ENCODE measurements at regions of chr1 and their contacts with region 1.

Region 1: DNA sequence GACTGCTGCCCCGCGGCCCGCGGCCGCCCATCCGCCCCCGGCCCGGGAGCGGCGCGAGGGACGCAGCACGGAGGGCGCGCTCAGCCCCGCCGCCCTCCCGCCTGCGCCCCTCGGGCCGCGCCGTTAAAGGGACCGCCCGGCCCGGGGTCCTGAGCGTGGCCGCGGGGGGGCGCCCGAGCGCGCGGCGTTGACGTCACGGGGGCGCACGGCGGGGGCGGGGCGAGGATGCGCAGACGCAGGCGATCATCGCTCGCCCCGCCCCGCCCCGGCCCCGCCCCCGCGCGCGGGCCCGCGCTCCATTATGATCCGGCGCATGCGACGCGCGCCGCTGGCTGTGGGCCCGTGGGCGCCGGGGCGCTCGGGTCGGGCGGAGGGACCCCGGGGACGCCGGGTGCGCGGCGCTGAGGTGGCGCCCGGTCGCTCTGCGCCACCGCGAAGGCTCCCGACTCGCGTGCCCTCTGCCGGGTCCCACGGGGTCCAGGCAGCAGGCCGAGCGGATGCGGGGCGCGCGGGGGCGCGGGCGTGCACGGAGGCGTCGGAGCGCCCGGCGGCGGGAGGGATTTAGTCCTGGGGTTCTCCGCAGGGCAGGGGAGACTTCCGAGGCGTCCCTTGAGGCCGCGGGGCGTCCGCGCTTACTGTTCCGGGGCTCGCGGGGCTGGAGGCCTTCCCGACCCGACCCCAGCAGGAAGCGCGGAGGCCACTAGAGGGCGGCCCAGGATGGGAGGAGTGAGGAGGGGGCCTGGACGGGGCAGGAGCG is at the start of gene DVL1:
- DNase-seq: peak; percentile 74 to 86 (median 81)
- H3K4me3 ChIP-seq: peak within 1 kb of the TSS; percentile 60
- H3K27ac ChIP-seq: peak within 1 kb of the TSS; percentile 59 to 90
- H3K4me1 ChIP-seq: peaks cover 33% of the 10 kb centered on the region
- H3K27me3 ChIP-seq: no peaks in the 10 kb centered on the region
- CTCF ChIP-seq: peak in 2 of 3 donors; percentile 68 to 77
- EP300 ChIP-seq: no peak
- POLR2A ChIP-seq: peak; percentile 41
- total RNA-seq, gene DVL1: 38.0 to 85.2 (median 64.9) TPM

Region 2: DNA sequence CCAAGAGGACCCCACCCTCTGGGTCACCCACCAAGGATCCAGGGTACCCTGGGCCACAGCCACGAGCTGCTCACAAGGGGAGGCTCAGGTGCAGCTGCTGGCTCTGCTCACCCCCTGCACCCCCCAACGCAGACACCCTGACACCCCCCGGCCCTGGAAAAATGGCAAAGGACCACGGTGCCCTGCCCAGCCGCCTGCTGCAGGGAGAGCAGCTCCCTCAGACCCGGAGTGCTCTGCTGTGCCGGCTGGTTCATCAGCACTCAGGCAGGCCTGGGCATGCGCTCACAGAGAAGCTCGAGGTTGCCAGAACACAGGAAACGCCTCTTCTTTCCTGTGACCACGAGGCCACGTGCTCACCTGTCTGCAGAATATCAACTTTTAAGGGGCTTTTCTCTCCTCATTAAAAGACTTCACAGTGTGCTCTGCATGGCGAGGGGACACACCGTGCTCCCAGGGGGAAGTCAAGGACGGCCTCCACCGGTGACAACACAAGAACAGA is 98.6 kb before region 1 on chr1:
- intact Hi-C with region 1: no loop called
- DNase-seq: no peak
- H3K4me3 ChIP-seq: no peak overlapping the region
- H3K27ac ChIP-seq: no peak overlapping the region
- H3K4me1 ChIP-seq: no peaks in the 10 kb centered on the region
- H3K27me3 ChIP-seq: no peaks in the 10 kb centered on the region
- CTCF ChIP-seq: no peak
- EP300 ChIP-seq: no peak
- POLR2A ChIP-seq: no peak

Region 3: GRCh38 chr1:1273512-1274298 is 75.7 kb before region 1 on chr1 and contains the start of gene UBE2J2:
- intact Hi-C with region 1: loop called in 1 of 4 experiments (anchors 1 kb)
- DNase-seq: peak; percentile 93 to 95 (median 95)
- H3K4me3 ChIP-seq: peak within 1 kb of the TSS; percentile 82
- H3K27ac ChIP-seq: peak within 1 kb of the TSS; percentile 40 to 50
- H3K4me1 ChIP-seq: peaks cover 28% of the 10 kb centered on the region
- H3K27me3 ChIP-seq: no peaks in the 10 kb centered on the region
- CTCF ChIP-seq: no peak
- EP300 ChIP-seq: no peak
- POLR2A ChIP-seq: peak; percentile 69
- total RNA-seq, gene UBE2J2: 35.8 to 55.6 (median 49.3) TPM

Region 4: DNA sequence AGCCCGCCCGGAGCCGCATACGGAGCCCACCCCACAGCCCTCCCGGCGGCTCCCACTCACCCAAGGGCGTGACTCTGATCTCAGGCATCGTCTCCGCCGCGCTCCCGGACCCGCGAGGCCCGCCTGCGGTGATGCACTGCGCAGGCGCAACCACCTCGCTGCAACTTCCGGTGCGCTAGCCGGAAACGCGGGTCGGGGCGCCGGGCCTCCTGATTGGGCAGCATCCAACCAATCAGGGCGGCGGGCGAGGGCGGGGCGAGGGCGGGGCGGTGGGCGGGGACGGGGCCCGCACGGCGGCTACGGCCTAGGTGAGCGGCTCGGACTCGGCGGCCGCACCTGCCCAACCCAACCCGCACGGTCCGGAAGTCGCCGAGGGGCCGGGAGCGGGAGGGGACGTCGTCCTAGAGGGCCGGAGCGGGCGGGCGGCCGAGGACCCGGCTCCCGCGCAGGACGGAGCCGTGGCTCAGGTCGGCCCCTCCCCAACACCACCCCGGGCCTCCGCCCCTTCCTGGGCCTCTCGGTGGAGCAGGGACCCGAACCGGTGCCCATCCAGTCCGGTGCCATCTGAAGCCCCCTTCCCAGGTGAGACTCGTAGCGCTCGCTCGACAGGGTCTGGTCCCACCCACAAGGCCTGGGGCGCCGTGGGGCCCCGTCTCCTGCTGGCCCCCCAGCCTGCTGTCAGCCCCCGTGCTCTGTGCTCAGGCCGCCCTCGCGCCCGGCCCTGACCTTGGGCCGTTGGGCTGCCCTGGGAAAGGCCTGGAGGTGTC is 24.7 kb before region 1 on chr1 and contains the starts of genes CPTP and INTS11:
- intact Hi-C with region 1: loop called in 1 of 4 experiments (anchors 2 kb)
- DNase-seq: peak; percentile 94 to 97 (median 95)
- H3K4me3 ChIP-seq: peak within 1 kb of the TSS; percentile 78
- H3K27ac ChIP-seq: peak within 1 kb of the TSS; percentile 1 to 74
- H3K4me1 ChIP-seq: peaks cover 10% of the 10 kb centered on the region
- H3K27me3 ChIP-seq: no peaks in the 10 kb centered on the region
- CTCF ChIP-seq: no peak
- EP300 ChIP-seq: no peak
- POLR2A ChIP-seq: peak; percentile 70
- total RNA-seq, gene CPTP: 13.8 to 21.0 (median 14.8) TPM
- total RNA-seq, gene INTS11: 102 to 135 (median 109) TPM

Region 5: DNA sequence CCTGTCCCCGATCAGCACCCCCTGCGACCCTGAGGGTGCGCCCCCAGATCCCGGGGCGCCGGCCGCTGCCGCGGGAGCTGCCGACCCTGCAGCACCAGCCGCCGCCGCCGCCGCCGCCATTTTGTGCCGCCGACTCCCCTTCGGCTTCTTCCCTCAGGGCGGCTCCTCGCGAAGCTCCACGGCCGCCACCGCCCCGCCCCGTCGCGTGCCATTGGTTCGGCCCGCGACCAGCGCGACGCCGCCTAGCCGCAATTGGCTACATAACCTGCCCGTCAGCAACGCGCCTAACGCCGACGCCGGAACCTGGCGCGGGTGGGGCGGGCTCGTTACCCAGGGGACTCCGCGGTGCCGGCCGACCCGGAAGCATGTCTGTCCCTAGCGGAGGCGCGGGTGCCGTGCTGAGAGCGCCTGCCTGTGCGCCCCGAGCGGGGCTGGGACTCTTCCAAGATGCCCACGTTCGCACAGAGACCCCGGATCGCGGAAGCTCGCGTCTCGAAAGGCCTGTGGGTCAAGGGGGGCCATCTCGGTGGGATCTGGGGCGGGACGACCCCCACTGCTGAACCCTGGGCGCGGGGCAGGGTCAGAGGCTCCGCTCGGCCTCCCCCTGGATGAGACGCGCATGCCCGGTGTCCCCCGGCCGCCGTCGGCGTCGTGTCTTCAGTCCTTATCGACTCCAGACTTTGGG is 49.9 kb after region 1 on chr1 and contains the start of gene CCNL2:
- intact Hi-C with region 1: loop called in 1 of 4 experiments (anchors 2 kb)
- DNase-seq: peak; percentile 98 to 99 (median 99)
- H3K4me3 ChIP-seq: peak within 1 kb of the TSS; percentile 64
- H3K27ac ChIP-seq: peak within 1 kb of the TSS; percentile 44 to 61
- H3K4me1 ChIP-seq: peaks cover 10% of the 10 kb centered on the region
- H3K27me3 ChIP-seq: no peaks in the 10 kb centered on the region
- CTCF ChIP-seq: peak; percentile 59 to 91 (median 80)
- EP300 ChIP-seq: no peak
- POLR2A ChIP-seq: peak; percentile 35
- total RNA-seq, gene CCNL2: 159 to 245 (median 196) TPM